Vagina (tissue), 2 donors: ENCODE measurements at regions of chr10 and their contacts with region 1.

Region 1: GRCh38 chr10:79463578-79464496 is 18.4 kb upstream of the ZCCHC24 start:
- DNase-seq: peak in 1 of 2 donors; percentile 84
- H3K4me3 ChIP-seq: no peak overlapping the region
- H3K27ac ChIP-seq: no peak overlapping the region
- H3K4me1 ChIP-seq: peaks cover 10% of the 10 kb centered on the region
- H3K27me3 ChIP-seq: no peaks in the 10 kb centered on the region
- CTCF ChIP-seq: no peak
- POLR2A ChIP-seq: no peak

Region 2: DNA sequence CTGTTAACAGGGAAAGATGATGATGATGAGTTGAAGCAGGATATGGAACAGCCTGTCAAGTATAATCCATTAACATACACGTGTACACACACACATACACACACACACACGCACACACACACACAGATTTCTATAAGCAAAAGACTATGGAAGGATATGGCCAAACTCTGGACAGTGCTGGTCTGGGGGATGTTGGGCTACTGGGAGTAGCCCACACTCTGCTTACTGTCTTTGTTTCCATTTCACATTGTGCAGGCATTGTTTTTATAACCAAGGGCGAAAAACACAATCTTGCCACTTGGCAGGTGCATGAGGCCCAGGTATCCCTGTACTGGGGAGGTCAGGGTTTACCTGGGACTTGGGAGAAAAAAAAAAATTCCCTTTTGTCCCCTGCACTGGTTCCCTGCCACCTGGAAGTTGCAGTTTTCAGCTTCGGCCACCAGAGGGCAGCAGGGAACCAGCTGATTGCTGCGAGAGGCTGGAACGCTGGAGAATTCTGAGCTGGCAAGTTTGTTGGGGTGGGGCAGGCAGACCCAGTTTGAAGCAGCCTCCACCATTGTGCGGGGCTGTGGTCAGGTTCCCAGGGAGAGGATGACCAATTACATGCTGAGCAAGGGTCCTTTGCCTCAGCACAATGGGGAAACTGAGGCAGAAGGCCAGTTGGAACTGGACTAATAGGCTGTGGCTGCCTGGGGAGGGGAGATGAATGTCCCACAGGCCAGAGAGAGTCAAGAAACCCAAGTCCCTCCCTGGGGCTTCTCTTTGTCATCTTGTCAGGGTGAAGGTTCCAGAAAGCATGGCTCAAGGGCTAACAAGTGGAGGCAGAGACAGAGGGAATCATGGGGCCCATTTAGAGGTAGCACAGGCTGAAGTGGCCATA is 89.3 kb before region 1 on chr10:
- intact Hi-C with region 1: loop called (anchors 2 kb)
- DNase-seq: peak; percentile 88 to 94
- H3K4me3 ChIP-seq: no peak overlapping the region
- H3K27ac ChIP-seq: peak overlapping the region; percentile 33
- H3K4me1 ChIP-seq: peaks cover 15% of the 10 kb centered on the region
- H3K27me3 ChIP-seq: no peaks in the 10 kb centered on the region
- CTCF ChIP-seq: peak; percentile 92 to 99 (median 98)
- POLR2A ChIP-seq: no peak

Region 3: DNA sequence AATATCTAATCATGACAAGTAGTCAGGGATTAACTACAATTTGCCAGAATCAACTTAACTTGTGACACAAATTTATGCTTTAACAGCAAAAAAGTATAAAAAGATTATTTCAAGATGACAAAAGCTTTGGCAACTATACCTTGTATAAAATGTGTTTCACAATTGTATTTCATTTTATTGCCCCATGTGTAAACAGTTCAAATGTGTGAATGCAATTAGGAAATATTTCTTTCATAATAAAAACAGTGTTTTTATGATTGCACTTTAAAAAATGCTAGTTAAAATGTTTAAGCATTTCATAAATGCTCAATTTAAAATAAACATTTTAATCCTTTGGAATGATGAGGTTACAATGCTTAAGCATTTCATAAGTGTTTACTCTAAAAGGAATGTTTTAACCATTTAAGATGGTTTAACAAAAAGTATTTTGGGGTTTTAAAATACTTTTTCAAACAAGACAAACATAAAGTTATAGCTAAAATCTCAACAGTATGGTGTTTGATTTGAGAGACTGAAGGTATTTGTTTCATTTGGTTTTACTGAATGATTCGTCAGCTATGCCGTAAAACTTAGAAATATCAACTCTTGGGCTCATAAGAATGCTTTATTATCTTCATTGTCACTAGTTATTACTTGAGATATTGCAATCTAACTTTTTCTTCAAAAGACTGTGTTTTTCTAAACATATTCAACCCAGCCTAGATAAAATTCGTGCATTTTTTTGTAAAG is 434.9 kb after region 1 on chr10:
- intact Hi-C with region 1: no loop called
- DNase-seq: no peak
- H3K4me3 ChIP-seq: no peak overlapping the region
- H3K27ac ChIP-seq: no peak overlapping the region
- H3K4me1 ChIP-seq: no peaks in the 10 kb centered on the region
- H3K27me3 ChIP-seq: no peaks in the 10 kb centered on the region
- CTCF ChIP-seq: no peak
- POLR2A ChIP-seq: no peak